A673 (cell line): ENCODE measurements at regions of chr14 and their contacts with region 1.

Region 1: DNA sequence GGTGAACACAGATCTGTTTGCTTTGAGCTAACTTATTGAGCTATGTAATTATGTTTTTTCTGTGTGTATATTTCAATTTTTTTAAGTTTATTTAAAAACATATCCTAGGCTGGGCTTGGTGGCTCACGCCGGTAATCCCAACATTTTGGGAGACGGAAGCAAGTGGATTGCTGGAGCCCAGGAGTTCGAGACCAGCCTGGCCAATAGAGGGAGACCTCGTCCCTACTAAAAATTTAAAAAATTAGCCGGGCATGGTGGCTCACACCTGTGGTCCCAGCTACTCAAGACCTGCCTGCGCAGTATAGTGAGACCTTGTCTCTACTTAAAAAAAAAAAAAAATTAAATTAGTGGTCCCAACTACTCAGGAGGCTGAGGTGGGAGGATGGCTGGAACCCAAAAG is 16.2 kb upstream of the RNASE1 start:
- DNase-seq: no peak
- H3K4me3 ChIP-seq: no peak overlapping the region
- H3K27ac ChIP-seq: no peak overlapping the region
- H3K4me1 ChIP-seq: no peaks in the 10 kb centered on the region
- H3K27me3 ChIP-seq: no peaks in the 10 kb centered on the region
- CTCF ChIP-seq: no peak

Region 2: GRCh38 chr14:20614038-20614840 is 204.6 kb before region 1 on chr14:
- CTCF ChIA-PET with region 1: no interaction called
- POLR2A ChIA-PET with region 1: no interaction called
- intact Hi-C with region 1: no loop called
- DNase-seq: no peak
- H3K4me3 ChIP-seq: peak overlapping the region; percentile 52
- H3K27ac ChIP-seq: peak overlapping the region; percentile 45
- H3K4me1 ChIP-seq: peaks cover 10% of the 10 kb centered on the region
- H3K27me3 ChIP-seq: no peaks in the 10 kb centered on the region
- CTCF ChIP-seq: no peak

Region 3: DNA sequence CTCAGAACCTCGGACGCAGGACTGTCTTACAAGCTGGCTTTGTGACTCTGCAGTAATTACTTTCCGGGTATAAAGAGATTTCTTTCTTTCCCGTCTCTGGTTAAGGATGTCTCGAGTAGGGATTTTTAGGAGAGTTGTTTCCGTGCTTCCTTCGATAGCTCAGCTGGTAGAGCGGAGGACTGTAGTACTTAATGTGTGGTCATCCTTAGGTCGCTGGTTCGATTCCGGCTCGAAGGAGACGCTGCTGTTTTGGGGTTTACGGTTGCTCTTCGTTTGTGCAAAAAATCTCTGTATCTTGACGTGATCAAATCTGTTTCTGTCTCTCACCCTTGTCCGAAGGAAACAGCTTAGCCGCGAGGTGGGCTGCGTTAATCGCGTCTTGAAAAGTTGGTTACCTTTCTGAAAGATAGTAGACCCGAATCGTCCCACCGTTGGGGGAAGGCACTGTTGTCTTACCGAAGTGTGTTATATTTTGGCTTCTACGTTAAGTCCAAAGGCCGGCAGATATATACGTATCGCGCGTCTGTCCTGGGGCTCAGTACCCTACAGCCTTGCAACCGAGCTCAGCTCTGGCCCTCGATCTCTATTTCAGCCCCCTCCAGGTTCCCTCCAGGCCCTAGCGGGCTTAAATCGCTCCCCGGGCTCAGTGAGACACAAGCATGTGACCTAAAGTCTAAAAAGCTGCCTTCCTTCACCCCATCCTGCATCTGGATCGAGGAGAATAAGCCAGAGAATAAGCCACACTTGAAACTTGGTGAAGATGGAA is 135.6 kb before region 1 on chr14:
- CTCF ChIA-PET with region 1: no interaction called
- POLR2A ChIA-PET with region 1: no interaction called
- intact Hi-C with region 1: no loop called
- DNase-seq: peak; percentile 95
- H3K4me3 ChIP-seq: peak overlapping the region; percentile 79
- H3K27ac ChIP-seq: peak overlapping the region; percentile 96
- H3K4me1 ChIP-seq: peaks cover 16% of the 10 kb centered on the region
- H3K27me3 ChIP-seq: no peaks in the 10 kb centered on the region
- CTCF ChIP-seq: no peak

Region 4: DNA sequence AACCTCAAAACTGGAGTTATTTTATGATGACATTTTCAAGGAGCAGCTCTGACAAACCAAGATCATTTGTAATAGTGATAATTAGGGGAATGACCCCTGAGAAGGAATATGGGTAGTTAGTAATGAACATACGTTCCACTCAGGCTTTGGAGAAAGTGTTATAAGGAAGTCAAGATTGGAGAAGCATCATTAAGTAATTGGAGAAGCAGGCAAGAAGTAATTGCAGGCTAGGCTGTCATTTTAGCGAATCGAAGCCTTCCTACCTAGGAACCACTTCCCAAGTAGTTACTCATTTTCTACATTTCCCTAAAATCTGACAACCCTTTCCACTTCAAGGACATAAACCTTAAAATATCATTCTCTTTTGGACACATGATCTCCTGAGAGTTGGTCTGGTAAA is 49.4 kb before region 1 on chr14:
- CTCF ChIA-PET with region 1: no interaction called
- POLR2A ChIA-PET with region 1: no interaction called
- intact Hi-C with region 1: loop called (anchors 5 kb)
- DNase-seq: no peak
- H3K4me3 ChIP-seq: no peak overlapping the region
- H3K27ac ChIP-seq: no peak overlapping the region
- H3K4me1 ChIP-seq: no peaks in the 10 kb centered on the region
- H3K27me3 ChIP-seq: peaks cover 6% of the 10 kb centered on the region
- CTCF ChIP-seq: no peak

Region 5: GRCh38 chr14:21244540-21244939 is 425.7 kb after region 1 on chr14:
- CTCF ChIA-PET with region 1: no interaction called
- POLR2A ChIA-PET with region 1: no interaction called
- intact Hi-C with region 1: no loop called
- DNase-seq: no peak
- H3K4me3 ChIP-seq: no peak overlapping the region
- H3K27ac ChIP-seq: peak overlapping the region; percentile 24
- H3K4me1 ChIP-seq: peaks cover 15% of the 10 kb centered on the region
- H3K27me3 ChIP-seq: no peaks in the 10 kb centered on the region
- CTCF ChIP-seq: no peak